H1 (cell line): ENCODE measurements at regions of chr1 and their contacts with region 1.

Region 1: GRCh38 chr1:179002552-179003345 is 22.9 kb upstream of the FAM20B start:
- DNase-seq: peak; percentile 82 to 99
- H3K4me3 ChIP-seq: peak overlapping the region in 1 of 4 experiments; percentile 39; a peak in 1 of 8 replicates
- H3K27ac ChIP-seq: no peak overlapping the region
- H3K4me1 ChIP-seq: no peaks in the 10 kb centered on the region
- H3K27me3 ChIP-seq: no peaks in the 10 kb centered on the region
- CTCF ChIP-seq: peak; percentile 83 to 98 (median 97)
- EP300 ChIP-seq: no peak
- POLR2A ChIP-seq: no peak
- RAD21 ChIP-seq: peak; percentile 97 to 98

Region 2: GRCh38 chr1:178501705-178502329 is 500.9 kb before region 1 on chr1:
- CTCF ChIA-PET with region 1: interaction called, 14 read pairs
- POLR2A ChIA-PET with region 1: no interaction called
- DNase-seq: peak; percentile 56 to 96
- H3K4me3 ChIP-seq: no peak overlapping the region
- H3K27ac ChIP-seq: no peak overlapping the region
- H3K4me1 ChIP-seq: no peaks in the 10 kb centered on the region; a peak in 1 of 7 replicates
- H3K27me3 ChIP-seq: no peaks in the 10 kb centered on the region
- CTCF ChIP-seq: peak; percentile 84 to 95 (median 87)
- EP300 ChIP-seq: no peak
- POLR2A ChIP-seq: no peak
- RAD21 ChIP-seq: peak; percentile 70 to 79

Region 3: GRCh38 chr1:178581351-178582303 is 421.1 kb before region 1 on chr1:
- CTCF ChIA-PET with region 1: interaction called, 11 read pairs
- POLR2A ChIA-PET with region 1: no interaction called
- DNase-seq: peak; percentile 51 to 62
- H3K4me3 ChIP-seq: peak overlapping the region in 2 of 4 experiments; percentile 1 to 5; a peak in 2 of 8 replicates
- H3K27ac ChIP-seq: peak overlapping the region; percentile 59; the same call in 1 of the 2 replicates
- H3K4me1 ChIP-seq: peaks cover 8 to 13% (median 12%) of the 10 kb centered on the region in 4 experiments
- H3K27me3 ChIP-seq: no peaks in the 10 kb centered on the region; a peak in 2 of 7 replicates
- CTCF ChIP-seq: peak in 2 of 3 experiments; percentile 30 to 31; a peak in 2 of 4 replicates
- EP300 ChIP-seq: no peak
- POLR2A ChIP-seq: peak in 1 of 2 experiments; percentile 28; a peak in 1 of 3 replicates
- RAD21 ChIP-seq: 0 out of 4 replicates have a peak, but pooled peaks of 1 of the 2 experiments have one; percentile 20

Region 4: GRCh38 chr1:178774263-178774662 is 228.5 kb before region 1 on chr1:
- CTCF ChIA-PET with region 1: interaction called, 34 read pairs
- POLR2A ChIA-PET with region 1: no interaction called
- DNase-seq: no peak
- H3K4me3 ChIP-seq: no peak overlapping the region
- H3K27ac ChIP-seq: no peak overlapping the region
- H3K4me1 ChIP-seq: no peaks in the 10 kb centered on the region
- H3K27me3 ChIP-seq: no peaks in the 10 kb centered on the region
- CTCF ChIP-seq: no peak
- EP300 ChIP-seq: no peak
- POLR2A ChIP-seq: no peak
- RAD21 ChIP-seq: no peak

Region 5: DNA sequence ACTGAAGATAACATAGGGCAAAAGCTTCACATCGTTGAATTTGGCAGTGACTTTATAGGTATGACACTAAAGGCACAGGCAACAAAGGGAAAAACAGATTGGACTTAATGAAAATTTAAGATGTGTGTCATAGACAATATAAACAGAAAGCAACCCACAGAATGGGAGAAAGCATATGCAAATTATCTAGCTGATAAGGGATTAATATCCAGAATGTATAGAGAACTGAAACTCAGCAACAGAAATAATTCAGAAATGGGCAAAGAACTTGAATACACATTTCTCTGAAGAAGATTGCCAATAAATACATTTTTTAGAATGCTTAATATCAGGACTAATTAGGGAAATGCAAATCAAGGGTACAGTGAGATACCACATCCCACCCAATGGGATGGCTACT is 76.7 kb before region 1 on chr1:
- CTCF ChIA-PET with region 1: interaction called, 14 read pairs
- POLR2A ChIA-PET with region 1: interaction called, 3 read pairs
- DNase-seq: no peak
- H3K4me3 ChIP-seq: no peak overlapping the region
- H3K27ac ChIP-seq: no peak overlapping the region
- H3K4me1 ChIP-seq: peaks cover 5 to 13% (median 8%) of the 10 kb centered on the region in 4 experiments; a peak in 4 of 7 replicates
- H3K27me3 ChIP-seq: no peaks in the 10 kb centered on the region
- CTCF ChIP-seq: no peak
- EP300 ChIP-seq: no peak
- POLR2A ChIP-seq: no peak
- RAD21 ChIP-seq: no peak

Region 6: DNA sequence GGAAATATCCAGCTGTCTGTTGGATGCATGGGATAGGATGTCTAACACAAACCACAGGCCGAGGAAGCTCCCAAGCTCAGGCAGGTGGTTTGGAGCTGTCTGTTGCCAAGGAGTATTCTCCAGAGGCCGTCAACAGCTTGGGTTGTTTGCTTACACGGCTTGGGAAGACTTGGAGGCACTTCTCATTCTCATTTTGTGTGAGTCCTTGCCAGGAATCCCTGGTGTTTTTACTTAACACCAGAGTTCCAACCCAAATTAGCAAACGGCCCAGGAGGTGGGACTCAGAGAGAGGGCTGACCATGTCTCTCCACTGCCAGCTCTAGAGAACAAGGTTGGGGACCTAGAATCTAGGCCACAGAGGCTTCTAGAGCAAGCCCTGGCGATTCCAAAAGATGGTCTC is 49.7 kb before region 1 on chr1:
- CTCF ChIA-PET with region 1: interaction called, 11 read pairs
- POLR2A ChIA-PET with region 1: no interaction called
- DNase-seq: no peak
- H3K4me3 ChIP-seq: no peak overlapping the region
- H3K27ac ChIP-seq: no peak overlapping the region
- H3K4me1 ChIP-seq: no peaks in the 10 kb centered on the region
- H3K27me3 ChIP-seq: no peaks in the 10 kb centered on the region
- CTCF ChIP-seq: no peak
- EP300 ChIP-seq: no peak
- POLR2A ChIP-seq: no peak
- RAD21 ChIP-seq: no peak

Region 7: DNA sequence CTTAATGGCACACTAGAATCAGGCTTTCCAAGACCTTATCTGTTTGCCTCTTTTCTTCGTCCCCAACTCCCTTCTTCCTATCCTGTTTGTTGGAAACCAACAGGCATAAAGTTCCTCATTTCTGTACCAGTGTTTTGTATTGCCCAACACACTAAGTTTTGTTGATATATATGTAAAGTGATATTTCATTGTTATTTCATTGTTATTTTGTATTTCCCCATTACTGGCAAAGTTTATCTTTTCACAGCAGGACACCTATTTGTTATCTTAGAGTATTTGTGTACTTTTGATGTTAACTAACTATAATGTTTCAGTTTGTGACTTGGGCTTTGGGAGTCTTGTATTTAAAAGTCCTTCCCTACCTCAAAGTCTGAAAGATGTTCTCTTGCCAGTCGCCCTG is 50.0 kb after region 1 on chr1:
- CTCF ChIA-PET with region 1: no interaction called
- POLR2A ChIA-PET with region 1: no interaction called
- DNase-seq: no peak
- H3K4me3 ChIP-seq: no peak overlapping the region
- H3K27ac ChIP-seq: no peak overlapping the region
- H3K4me1 ChIP-seq: no peaks in the 10 kb centered on the region
- H3K27me3 ChIP-seq: no peaks in the 10 kb centered on the region
- CTCF ChIP-seq: no peak
- EP300 ChIP-seq: no peak
- POLR2A ChIP-seq: no peak
- RAD21 ChIP-seq: no peak

Region 8: GRCh38 chr1:179966551-179966950 is 963.8 kb after region 1 on chr1:
- CTCF ChIA-PET with region 1: no interaction called
- POLR2A ChIA-PET with region 1: no interaction called
- DNase-seq: no peak
- H3K4me3 ChIP-seq: no peak overlapping the region
- H3K27ac ChIP-seq: no peak overlapping the region
- H3K4me1 ChIP-seq: no peaks in the 10 kb centered on the region
- H3K27me3 ChIP-seq: no peaks in the 10 kb centered on the region
- CTCF ChIP-seq: no peak
- EP300 ChIP-seq: no peak
- POLR2A ChIP-seq: no peak
- RAD21 ChIP-seq: no peak